Heart right ventricle (tissue), 16 donors: ENCODE measurements at regions of chr1 and their contacts with region 1.

Region 1: GRCh38 chr1:242554577-242554976 is 30.1 kb upstream of the PLD5 start:
- DNase-seq: no peak
- ATAC-seq: no peak
- H3K4me3 ChIP-seq: no peak overlapping the region
- H3K27ac ChIP-seq: no peak overlapping the region
- H3K4me1 ChIP-seq: no peaks in the 10 kb centered on the region
- H3K27me3 ChIP-seq: peaks cover 0 to 5% (median 0%) of the 10 kb centered on the region in 7 donors
- CTCF ChIP-seq: no peak

Region 2: GRCh38 chr1:242462867-242463266 is 91.7 kb before region 1 on chr1:
- intact Hi-C with region 1: no loop called
- DNase-seq: no peak
- ATAC-seq: no peak
- H3K4me3 ChIP-seq: no peak overlapping the region
- H3K27ac ChIP-seq: no peak overlapping the region
- H3K4me1 ChIP-seq: no peaks in the 10 kb centered on the region
- H3K27me3 ChIP-seq: peaks cover 0 to under 1% (median 0%) of the 10 kb centered on the region in 7 donors
- CTCF ChIP-seq: no peak

Region 3: GRCh38 chr1:242477944-242478343 is 76.6 kb before region 1 on chr1:
- intact Hi-C with region 1: loop called in 1 of 10 experiments (anchors 10 kb)
- DNase-seq: no peak
- ATAC-seq: peak in 3 of 8 donors; percentile 11 to 37 (median 31)
- H3K4me3 ChIP-seq: no peak overlapping the region
- H3K27ac ChIP-seq: no peak overlapping the region
- H3K4me1 ChIP-seq: peaks cover 0 to 8% (median 0%) of the 10 kb centered on the region in 9 donors
- H3K27me3 ChIP-seq: no peaks in the 10 kb centered on the region
- CTCF ChIP-seq: no peak

Region 4: GRCh38 chr1:242506724-242507123 is 47.9 kb before region 1 on chr1:
- intact Hi-C with region 1: no loop called
- DNase-seq: no peak
- ATAC-seq: no peak
- H3K4me3 ChIP-seq: no peak overlapping the region
- H3K27ac ChIP-seq: no peak overlapping the region
- H3K4me1 ChIP-seq: no peaks in the 10 kb centered on the region
- H3K27me3 ChIP-seq: no peaks in the 10 kb centered on the region
- CTCF ChIP-seq: no peak

Region 5: DNA sequence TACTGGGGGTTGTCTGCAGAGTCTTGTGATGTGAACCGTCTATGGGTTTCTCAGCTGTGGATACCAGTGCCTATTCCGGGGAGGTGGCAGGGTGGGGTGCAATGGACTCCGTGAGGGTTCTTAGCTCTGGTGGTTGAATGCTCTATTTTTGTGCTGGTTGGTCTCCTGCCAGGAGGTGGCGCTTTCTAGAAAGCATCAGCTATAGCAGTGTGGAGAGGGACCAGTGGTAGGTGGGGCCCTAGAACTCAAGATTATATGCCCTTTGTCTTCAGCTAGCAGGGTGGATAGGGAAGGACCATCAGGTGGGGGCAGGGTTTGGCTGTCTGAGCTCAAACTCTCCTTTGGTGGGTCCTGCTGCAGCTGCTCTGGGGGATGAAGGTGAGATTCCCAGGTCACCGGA is 97.2 kb after region 1 on chr1:
- intact Hi-C with region 1: no loop called
- DNase-seq: no peak
- ATAC-seq: no peak
- H3K4me3 ChIP-seq: no peak overlapping the region
- H3K27ac ChIP-seq: no peak overlapping the region
- H3K4me1 ChIP-seq: no peaks in the 10 kb centered on the region
- H3K27me3 ChIP-seq: no peaks in the 10 kb centered on the region
- CTCF ChIP-seq: peak in 3 of 9 donors; percentile 18 to 30 (median 25)